ENCODE measurements at regions of chr16 and their contacts with region 1.

Region 1: GRCh38 chr16:57734925-57735754 is 430 bp upstream of the KATNB1 start:
- DNase-seq: peak; percentile 98 to 99
- H3K4me3 ChIP-seq: peak overlapping the region; percentile 73 to 93 (median 86)
- H3K27ac ChIP-seq: peak overlapping the region; percentile 89
- H3K4me1 ChIP-seq: peaks cover 0 to 15% (median 4%) of the 10 kb centered on the region in 4 experiments; a peak in 6 of 7 replicates
- H3K27me3 ChIP-seq: no peaks in the 10 kb centered on the region; a peak in 1 of 7 replicates
- CTCF ChIP-seq: no peak
- EP300 ChIP-seq: no peak
- POLR2A ChIP-seq: peak in 1 of 2 experiments; percentile 82; a peak in 2 of 3 replicates
- RAD21 ChIP-seq: no peak

Region 2: GRCh38 chr16:57639172-57639887 is 95.8 kb before region 1 on chr16:
- CTCF ChIA-PET with region 1: interaction called, 18 read pairs
- POLR2A ChIA-PET with region 1: interaction called, 4 read pairs
- DNase-seq: peak in 1 of 2 experiments; percentile 84
- H3K4me3 ChIP-seq: peak overlapping the region in 1 of 4 experiments; percentile 18; a peak in 2 of 8 replicates
- H3K27ac ChIP-seq: no peak overlapping the region
- H3K4me1 ChIP-seq: peaks cover 0 to 3% (median 1%) of the 10 kb centered on the region in 4 experiments; a peak in 4 of 7 replicates
- H3K27me3 ChIP-seq: peaks cover 0 to 6% (median 4%) of the 10 kb centered on the region in 4 experiments; a peak in 5 of 7 replicates
- CTCF ChIP-seq: no peak
- EP300 ChIP-seq: no peak
- POLR2A ChIP-seq: no peak
- RAD21 ChIP-seq: no peak

Region 3: DNA sequence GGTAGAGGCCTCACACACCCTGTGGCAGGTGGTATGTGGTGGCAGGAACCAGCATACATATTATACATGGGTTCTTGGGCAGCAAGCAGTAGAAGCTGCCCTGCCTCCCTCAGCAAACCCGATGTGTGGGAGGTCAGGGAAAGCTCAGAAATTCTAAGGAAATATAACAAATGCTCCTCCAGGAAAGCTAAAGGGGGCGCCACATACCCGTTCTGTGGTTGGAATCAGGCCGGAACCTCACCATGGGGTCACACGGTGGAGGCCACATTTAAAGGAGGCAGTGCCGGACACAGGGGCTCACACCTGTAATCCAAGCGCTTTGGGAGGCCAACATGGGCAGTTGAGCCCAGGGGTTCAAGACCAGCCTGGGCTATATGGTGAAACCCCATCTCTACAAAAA is 12.0 kb before region 1 on chr16:
- CTCF ChIA-PET with region 1: interaction called, 10 read pairs
- POLR2A ChIA-PET with region 1: interaction called, 22 read pairs
- DNase-seq: peak in 1 of 2 experiments; percentile 77
- H3K4me3 ChIP-seq: no peak overlapping the region
- H3K27ac ChIP-seq: no peak overlapping the region
- H3K4me1 ChIP-seq: no peaks in the 10 kb centered on the region
- H3K27me3 ChIP-seq: no peaks in the 10 kb centered on the region; a peak in 1 of 7 replicates
- CTCF ChIP-seq: peak; percentile 58 to 81 (median 67)
- EP300 ChIP-seq: no peak
- POLR2A ChIP-seq: no peak
- RAD21 ChIP-seq: peak; percentile 73 to 85

Region 4: GRCh38 chr16:57748596-57748995 is 13.5 kb after region 1 on chr16:
- CTCF ChIA-PET with region 1: interaction called, 3 read pairs
- POLR2A ChIA-PET with region 1: interaction called, 12 read pairs
- DNase-seq: no peak
- H3K4me3 ChIP-seq: no peak overlapping the region
- H3K27ac ChIP-seq: no peak overlapping the region
- H3K4me1 ChIP-seq: no peaks in the 10 kb centered on the region
- H3K27me3 ChIP-seq: no peaks in the 10 kb centered on the region
- CTCF ChIP-seq: no peak
- EP300 ChIP-seq: no peak
- POLR2A ChIP-seq: no peak
- RAD21 ChIP-seq: no peak

Region 5: GRCh38 chr16:57757326-57757786 is 22.2 kb after region 1 on chr16:
- CTCF ChIA-PET with region 1: interaction called, 24 read pairs
- POLR2A ChIA-PET with region 1: interaction called, 13 read pairs
- DNase-seq: peak in 1 of 2 experiments; percentile 99
- H3K4me3 ChIP-seq: no peak overlapping the region
- H3K27ac ChIP-seq: no peak overlapping the region
- H3K4me1 ChIP-seq: peaks cover 0 to 12% (median 7%) of the 10 kb centered on the region in 4 experiments; a peak in 4 of 7 replicates
- H3K27me3 ChIP-seq: no peaks in the 10 kb centered on the region; a peak in 1 of 7 replicates
- CTCF ChIP-seq: peak; percentile 89 to 93 (median 91)
- EP300 ChIP-seq: no peak
- POLR2A ChIP-seq: no peak
- RAD21 ChIP-seq: peak; percentile 86 to 91

Measured in H1 (cell line).